ENCODE measurements at regions of chrX and their contacts with region 1.

Region 1: GRCh38 chrX:107776649-107777535 is 641 bp upstream of the NCBP2L start:
- DNase-seq: peak; percentile 42
- ATAC-seq: peak; percentile 87
- H3K4me3 ChIP-seq: peak overlapping the region; percentile 58; the same call in 1 of the 2 replicates
- H3K27ac ChIP-seq: no peak overlapping the region
- H3K4me1 ChIP-seq: no peaks in the 10 kb centered on the region
- H3K27me3 ChIP-seq: no peaks in the 10 kb centered on the region; a peak in 1 of 4 replicates
- CTCF ChIP-seq: peak; percentile 65 to 85 (median 77)
- EP300 ChIP-seq: no peak
- POLR2A ChIP-seq: no peak
- RAD21 ChIP-seq: peak; percentile 91

Region 2: GRCh38 chrX:106894392-106894909 is 882.4 kb before region 1 on chrX:
- CTCF ChIA-PET with region 1: interaction called, 5 read pairs
- POLR2A ChIA-PET with region 1: no interaction called
- RAD21 ChIA-PET with region 1: no interaction called
- SMC1A ChIA-PET with region 1: interaction called, 5 read pairs
- in situ Hi-C with region 1: no loop called
- intact Hi-C with region 1: loop called (anchors 2 kb)
- DNase-seq: no peak
- ATAC-seq: peak; percentile 79
- H3K4me3 ChIP-seq: no peak overlapping the region
- H3K27ac ChIP-seq: no peak overlapping the region
- H3K4me1 ChIP-seq: no peaks in the 10 kb centered on the region
- H3K27me3 ChIP-seq: no peaks in the 10 kb centered on the region; a peak in 1 of 4 replicates
- CTCF ChIP-seq: peak; percentile 79 to 85 (median 83)
- EP300 ChIP-seq: no peak
- POLR2A ChIP-seq: no peak
- RAD21 ChIP-seq: peak; percentile 63

Region 3: DNA sequence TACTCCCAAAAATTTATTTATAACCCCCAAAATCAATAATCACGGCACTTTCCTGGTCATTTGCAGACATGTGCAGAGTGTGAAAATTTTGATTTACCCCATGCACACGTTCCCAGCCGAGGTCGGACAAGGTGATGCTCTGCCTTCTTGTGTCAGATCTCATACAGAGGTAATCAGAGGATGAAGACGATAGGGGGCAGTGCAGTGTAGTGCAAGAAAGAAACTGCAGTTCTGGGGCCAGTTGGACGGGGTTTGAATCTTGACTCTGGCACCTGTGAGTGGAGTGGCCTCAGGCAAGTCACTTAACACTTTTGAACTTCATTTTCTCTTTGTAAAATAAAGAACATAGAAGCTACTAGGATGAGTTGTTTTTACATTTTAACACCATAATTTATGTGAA is 239.1 kb before region 1 on chrX:
- CTCF ChIA-PET with region 1: interaction called, 30 read pairs
- POLR2A ChIA-PET with region 1: interaction called, 5 read pairs
- RAD21 ChIA-PET with region 1: interaction called, 5 read pairs
- SMC1A ChIA-PET with region 1: interaction called, 5 read pairs
- in situ Hi-C with region 1: no loop called
- intact Hi-C with region 1: loop called (anchors 2 kb)
- DNase-seq: no peak
- ATAC-seq: peak; percentile 80
- H3K4me3 ChIP-seq: no peak overlapping the region
- H3K27ac ChIP-seq: no peak overlapping the region
- H3K4me1 ChIP-seq: no peaks in the 10 kb centered on the region
- H3K27me3 ChIP-seq: no peaks in the 10 kb centered on the region; a peak in 2 of 4 replicates
- CTCF ChIP-seq: peak; percentile 49 to 55 (median 51); a peak in 4 of 6 replicates
- EP300 ChIP-seq: no peak
- POLR2A ChIP-seq: no peak
- RAD21 ChIP-seq: peak; percentile 64

Region 4: DNA sequence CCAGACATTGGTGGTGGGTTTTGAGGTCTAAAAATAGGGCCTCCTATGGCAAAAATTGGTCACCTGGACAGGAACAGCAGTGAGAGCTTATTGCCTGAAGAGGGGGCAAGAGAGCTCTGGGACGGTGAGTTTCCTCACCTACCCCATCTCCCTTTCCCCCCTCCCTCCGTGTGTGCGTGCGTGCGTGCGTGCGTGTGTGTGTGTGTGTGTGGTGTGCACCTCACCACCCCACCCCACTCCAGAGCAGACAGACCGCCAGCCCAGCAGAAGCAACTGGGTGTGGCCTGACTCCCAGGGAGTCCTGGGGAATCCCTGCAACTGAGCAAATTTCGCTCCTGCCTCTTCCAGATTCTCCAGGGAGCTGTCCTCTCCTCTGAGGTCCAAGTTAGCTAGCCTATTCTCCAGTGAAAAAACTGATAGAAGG is 103.9 kb before region 1 on chrX:
- CTCF ChIA-PET with region 1: interaction called, 136 read pairs
- POLR2A ChIA-PET with region 1: interaction called, 15 read pairs
- RAD21 ChIA-PET with region 1: interaction called, 98 read pairs
- SMC1A ChIA-PET with region 1: interaction called, 149 read pairs
- in situ Hi-C with region 1: no loop called
- intact Hi-C with region 1: loop called (anchors 1 kb)
- DNase-seq: no peak
- ATAC-seq: peak; percentile 61
- H3K4me3 ChIP-seq: no peak overlapping the region
- H3K27ac ChIP-seq: peak overlapping the region; percentile 57
- H3K4me1 ChIP-seq: peaks cover 16% of the 10 kb centered on the region
- H3K27me3 ChIP-seq: no peaks in the 10 kb centered on the region
- CTCF ChIP-seq: peak; percentile 72 to 80 (median 73)
- EP300 ChIP-seq: no peak
- POLR2A ChIP-seq: no peak
- RAD21 ChIP-seq: peak; percentile 74

Region 5: GRCh38 chrX:107731831-107732502 is 44.9 kb before region 1 on chrX:
- CTCF ChIA-PET with region 1: interaction called, 18 read pairs
- POLR2A ChIA-PET with region 1: interaction called, 5 read pairs
- RAD21 ChIA-PET with region 1: interaction called, 19 read pairs
- SMC1A ChIA-PET with region 1: interaction called, 4 read pairs
- in situ Hi-C with region 1: no loop called
- intact Hi-C with region 1: no loop called
- DNase-seq: no peak
- ATAC-seq: no peak
- H3K4me3 ChIP-seq: no peak overlapping the region
- H3K27ac ChIP-seq: no peak overlapping the region
- H3K4me1 ChIP-seq: no peaks in the 10 kb centered on the region
- H3K27me3 ChIP-seq: no peaks in the 10 kb centered on the region
- CTCF ChIP-seq: no peak
- EP300 ChIP-seq: no peak
- POLR2A ChIP-seq: no peak
- RAD21 ChIP-seq: no peak

Region 6: DNA sequence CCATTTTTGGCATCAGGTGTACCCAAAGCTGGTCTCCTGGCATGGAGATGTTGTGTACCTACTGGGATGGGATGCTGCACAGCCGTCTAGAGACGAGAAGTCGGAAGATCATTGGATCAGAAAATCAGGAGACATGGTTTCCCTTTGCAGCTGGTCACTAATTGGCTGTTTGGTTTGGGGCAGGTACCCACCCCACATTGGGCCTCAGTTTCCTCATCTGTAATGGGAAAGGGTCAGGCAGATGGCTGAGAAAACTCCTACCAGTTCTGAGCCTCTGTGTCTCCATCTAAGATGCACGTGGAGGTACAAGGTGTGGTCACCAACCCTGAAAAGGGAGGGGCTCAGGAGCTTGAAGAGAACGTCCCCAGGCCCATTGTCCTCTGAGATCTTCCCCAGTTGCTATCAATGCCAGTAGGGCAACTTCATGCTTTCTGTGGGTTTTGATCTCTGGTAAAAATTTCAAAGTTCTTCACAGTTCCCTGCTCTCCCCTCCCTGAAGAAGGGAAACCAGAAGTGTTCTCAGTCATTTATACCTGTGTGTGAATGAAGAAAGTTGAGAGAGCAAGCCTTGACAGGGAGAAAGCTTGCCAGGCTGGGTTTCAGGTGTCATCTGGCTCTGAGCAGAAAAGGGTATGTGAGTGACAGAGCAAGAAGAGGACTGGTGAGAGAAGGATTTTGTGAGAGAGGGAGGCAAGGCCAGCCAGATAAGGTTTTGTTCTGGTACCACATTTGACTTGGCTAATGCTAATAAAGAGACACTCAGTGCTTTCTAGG is 16.4 kb before region 1 on chrX:
- CTCF ChIA-PET with region 1: interaction called, 16 read pairs
- POLR2A ChIA-PET with region 1: interaction called, 4 read pairs
- RAD21 ChIA-PET with region 1: interaction called, 19 read pairs
- SMC1A ChIA-PET with region 1: interaction called, 20 read pairs
- in situ Hi-C with region 1: no loop called
- intact Hi-C with region 1: no loop called
- DNase-seq: peak; percentile 32
- ATAC-seq: peak; percentile 46
- H3K4me3 ChIP-seq: no peak overlapping the region
- H3K27ac ChIP-seq: no peak overlapping the region
- H3K4me1 ChIP-seq: no peaks in the 10 kb centered on the region
- H3K27me3 ChIP-seq: no peaks in the 10 kb centered on the region
- CTCF ChIP-seq: no peak
- EP300 ChIP-seq: no peak
- POLR2A ChIP-seq: no peak
- RAD21 ChIP-seq: no peak

Region 7: GRCh38 chrX:108199691-108200090 is 422.8 kb after region 1 on chrX:
- CTCF ChIA-PET with region 1: no interaction called
- POLR2A ChIA-PET with region 1: no interaction called
- RAD21 ChIA-PET with region 1: no interaction called
- SMC1A ChIA-PET with region 1: no interaction called
- in situ Hi-C with region 1: no loop called
- intact Hi-C with region 1: no loop called
- DNase-seq: no peak
- ATAC-seq: peak; percentile 62
- H3K4me3 ChIP-seq: no peak overlapping the region
- H3K27ac ChIP-seq: no peak overlapping the region
- H3K4me1 ChIP-seq: no peaks in the 10 kb centered on the region
- H3K27me3 ChIP-seq: peaks cover 0 to 7% of the 10 kb centered on the region in 2 experiments; a peak in 1 of 4 replicates
- CTCF ChIP-seq: peak; percentile 47 to 64 (median 54)
- EP300 ChIP-seq: no peak
- POLR2A ChIP-seq: no peak
- RAD21 ChIP-seq: peak; percentile 50

Measured in GM12878 (cell line).